A549 (cell line): ENCODE measurements at regions of chr6 and their contacts with region 1.

Region 1: GRCh38 chr6:136249811-136250685 is at the start of gene MTFR2:
- DNase-seq: peak; percentile 96 to 98
- ATAC-seq: peak; percentile 89 to 95
- H3K4me3 ChIP-seq: peak within 1 kb of the TSS; percentile 91
- H3K27ac ChIP-seq: peak within 1 kb of the TSS; percentile 81 to 93
- H3K4me1 ChIP-seq: peaks cover 16% of the 10 kb centered on the region; the same call in 2 of the 3 replicates
- CTCF ChIP-seq: no peak
- EP300 ChIP-seq: no peak
- POLR2A ChIP-seq: peak; percentile 50
- RAD21 ChIP-seq: no peak
- polyA plus RNA-seq, gene MTFR2: 17.4 and 20.1 TPM in 2 replicates

Region 2: DNA sequence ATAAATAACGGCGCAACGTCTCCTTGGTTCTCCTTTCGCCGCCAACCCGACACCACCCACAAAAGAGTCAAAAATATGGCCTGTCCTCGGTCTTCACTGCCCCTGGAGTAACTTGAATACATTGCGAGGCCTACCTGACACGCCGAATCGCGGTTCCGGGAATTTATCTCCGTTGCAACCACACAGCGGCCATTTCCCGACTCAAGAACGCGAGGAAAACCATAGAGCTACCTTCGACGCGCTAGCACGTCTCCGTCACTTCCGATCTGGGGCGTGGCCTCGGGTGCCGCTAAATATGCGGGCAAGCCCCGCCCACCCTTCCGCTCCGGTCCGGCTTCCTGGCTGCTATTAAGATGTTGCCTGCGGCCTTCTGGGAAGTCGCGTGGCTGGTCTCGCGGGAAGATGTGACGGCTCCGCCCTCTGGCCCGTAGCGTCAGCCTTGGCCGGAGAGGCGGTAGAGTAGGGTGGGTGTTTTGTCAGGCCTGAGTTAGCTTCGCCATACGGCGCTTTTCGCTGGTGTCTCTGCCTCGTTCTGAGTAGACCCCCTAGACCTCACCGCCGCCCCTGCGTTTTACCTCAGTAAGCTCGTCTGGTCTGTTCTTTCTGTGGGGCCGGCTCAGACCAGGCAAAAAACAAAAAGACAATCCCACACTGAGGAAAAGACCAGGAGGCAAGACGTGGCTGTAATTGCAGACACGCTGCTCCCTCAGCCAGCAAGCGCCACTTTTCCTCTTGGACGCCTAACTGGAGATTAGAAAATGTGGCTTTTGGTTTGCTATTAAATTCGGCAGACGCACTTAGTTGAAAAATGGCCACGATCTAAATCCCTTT is 39.7 kb after region 1 on chr6 and contains the start of gene BCLAF1:
- CTCF ChIA-PET with region 1: interaction called, 7 read pairs
- POLR2A ChIA-PET with region 1: interaction called, 33 read pairs
- DNase-seq: peak; percentile 76 to 98
- ATAC-seq: peak; percentile 94
- H3K4me3 ChIP-seq: peak within 1 kb of the TSS; percentile 99
- H3K27ac ChIP-seq: peak within 1 kb of the TSS; percentile 99 to 100
- H3K4me1 ChIP-seq: peaks cover 22% of the 10 kb centered on the region
- CTCF ChIP-seq: no peak
- EP300 ChIP-seq: no peak
- POLR2A ChIP-seq: peak; percentile 82
- RAD21 ChIP-seq: no peak
- polyA plus RNA-seq, gene BCLAF1: 88.4 and 122 TPM in 2 replicates